CD4-positive, alpha-beta memory T cell (primary cell): ENCODE measurements at regions of chr1 and their contacts with region 1.

Region 1: DNA sequence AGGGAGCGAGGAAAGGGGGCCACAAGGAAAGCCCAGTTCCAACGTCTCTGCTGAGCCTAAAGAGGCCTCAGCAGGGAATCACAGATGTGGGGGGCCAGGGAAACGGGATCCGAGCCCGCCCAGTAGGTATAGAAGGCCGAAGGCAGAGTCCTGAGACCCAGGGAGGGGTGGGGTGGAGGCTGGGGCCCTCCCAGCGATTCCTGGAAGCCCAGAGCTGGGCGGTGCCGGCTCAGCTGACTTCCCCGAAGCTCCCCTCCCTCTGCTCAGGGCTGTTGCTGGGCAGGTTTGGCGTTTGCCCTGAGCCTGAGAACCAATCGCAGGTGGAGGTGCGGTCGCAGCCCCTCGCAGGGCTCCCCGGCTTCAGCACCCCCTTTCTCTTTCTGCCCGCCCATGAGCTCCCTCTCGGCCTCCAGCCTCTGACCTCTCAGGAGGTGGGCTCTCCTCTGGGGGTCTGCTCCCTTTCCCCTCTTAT is 12.8 kb downstream of the ADAMTSL4 start:
- DNase-seq: peak; percentile 75 to 88 (median 79)
- H3K4me3 ChIP-seq: peak overlapping the region; percentile 72 to 79
- H3K4me3 Mint-ChIP-seq: peak overlapping the region; percentile 90 to 99 (median 93)
- H3K27ac ChIP-seq: peak overlapping the region; percentile 93
- H3K27ac Mint-ChIP-seq: peak overlapping the region; percentile 95 to 100 (median 99)
- H3K4me1 ChIP-seq: peaks cover 66% of the 10 kb centered on the region
- H3K4me1 Mint-ChIP-seq: peaks cover 33 to 70% (median 47%) of the 10 kb centered on the region in 4 donors
- H3K27me3 ChIP-seq: no peaks in the 10 kb centered on the region
- H3K27me3 Mint-ChIP-seq: no peaks in the 10 kb centered on the region

Region 2: GRCh38 chr1:149886396-149887195 is 675.4 kb before region 1 on chr1:
- CTCF ChIA-PET with region 1: no interaction called
- POLR2A ChIA-PET with region 1: interaction called, 15 read pairs
- intact Hi-C with region 1: no loop called
- DNase-seq: peak; percentile 94 to 97 (median 96)
- H3K4me3 ChIP-seq: peak overlapping the region; percentile 75 to 82
- H3K4me3 Mint-ChIP-seq: no peak overlapping the region
- H3K27ac ChIP-seq: peak overlapping the region; percentile 88
- H3K27ac Mint-ChIP-seq: no peak overlapping the region
- H3K4me1 ChIP-seq: peaks cover 27% of the 10 kb centered on the region
- H3K4me1 Mint-ChIP-seq: peaks cover 8 to 19% (median 10%) of the 10 kb centered on the region in 4 donors
- H3K27me3 ChIP-seq: no peaks in the 10 kb centered on the region
- H3K27me3 Mint-ChIP-seq: no peaks in the 10 kb centered on the region

Region 3: GRCh38 chr1:150464422-150464826 is 97.6 kb before region 1 on chr1:
- CTCF ChIA-PET with region 1: interaction called, 10 read pairs
- POLR2A ChIA-PET with region 1: interaction called, 5 read pairs
- intact Hi-C with region 1: loop called (anchors 1 kb)
- DNase-seq: peak; percentile 66 to 77 (median 70)
- H3K4me3 ChIP-seq: no peak overlapping the region
- H3K4me3 Mint-ChIP-seq: no peak overlapping the region
- H3K27ac ChIP-seq: no peak overlapping the region
- H3K27ac Mint-ChIP-seq: peak overlapping the region in 3 of 7 donors; percentile 0 to 88 (median 38)
- H3K4me1 ChIP-seq: no peaks in the 10 kb centered on the region
- H3K4me1 Mint-ChIP-seq: peaks cover 0 to 6% (median 4%) of the 10 kb centered on the region in 4 donors
- H3K27me3 ChIP-seq: no peaks in the 10 kb centered on the region
- H3K27me3 Mint-ChIP-seq: no peaks in the 10 kb centered on the region

Region 4: GRCh38 chr1:150578965-150579798 is 17.2 kb after region 1 on chr1 and contains the start of gene MCL1:
- CTCF ChIA-PET with region 1: interaction called, 433 read pairs
- POLR2A ChIA-PET with region 1: interaction called, 1,751 read pairs
- intact Hi-C with region 1: loop called (anchors 1 kb)
- DNase-seq: peak; percentile 86 to 94 (median 89)
- H3K4me3 ChIP-seq: peak within 1 kb of the TSS; percentile 96 to 100
- H3K4me3 Mint-ChIP-seq: peak within 1 kb of the TSS; percentile 98 to 100 (median 99)
- H3K27ac ChIP-seq: peak within 1 kb of the TSS; percentile 97
- H3K27ac Mint-ChIP-seq: peak within 1 kb of the TSS; percentile 94 to 99 (median 99)
- H3K4me1 ChIP-seq: peaks cover 33% of the 10 kb centered on the region
- H3K4me1 Mint-ChIP-seq: peaks cover 18 to 58% (median 28%) of the 10 kb centered on the region in 4 donors
- H3K27me3 ChIP-seq: no peaks in the 10 kb centered on the region
- H3K27me3 Mint-ChIP-seq: no peaks in the 10 kb centered on the region
- total RNA-seq, gene MCL1: 314 to 331 TPM

Region 5: GRCh38 chr1:150621497-150622302 is 59.7 kb after region 1 on chr1:
- CTCF ChIA-PET with region 1: interaction called, 501 read pairs
- POLR2A ChIA-PET with region 1: interaction called, 439 read pairs
- intact Hi-C with region 1: loop called (anchors 1 kb)
- DNase-seq: peak; percentile 66 to 71 (median 69)
- H3K4me3 ChIP-seq: no peak overlapping the region
- H3K4me3 Mint-ChIP-seq: peak overlapping the region in 7 of 8 donors; percentile 8 to 61 (median 35)
- H3K27ac ChIP-seq: peak overlapping the region; percentile 53
- H3K27ac Mint-ChIP-seq: peak overlapping the region; percentile 82 to 95 (median 91)
- H3K4me1 ChIP-seq: peaks cover 38% of the 10 kb centered on the region
- H3K4me1 Mint-ChIP-seq: peaks cover 32 to 64% (median 51%) of the 10 kb centered on the region in 4 donors
- H3K27me3 ChIP-seq: no peaks in the 10 kb centered on the region
- H3K27me3 Mint-ChIP-seq: no peaks in the 10 kb centered on the region

Region 6: GRCh38 chr1:150696590-150697524 is 134.8 kb after region 1 on chr1 and contains the start of gene GOLPH3L:
- CTCF ChIA-PET with region 1: interaction called, 18 read pairs
- POLR2A ChIA-PET with region 1: interaction called, 9 read pairs
- intact Hi-C with region 1: loop called (anchors 1 kb)
- DNase-seq: peak; percentile 90 to 97 (median 93)
- H3K4me3 ChIP-seq: peak within 1 kb of the TSS; percentile 86 to 92
- H3K4me3 Mint-ChIP-seq: peak within 1 kb of the TSS; percentile 94 to 100 (median 98)
- H3K27ac ChIP-seq: peak within 1 kb of the TSS; percentile 70
- H3K27ac Mint-ChIP-seq: peak within 1 kb of the TSS; percentile 88 to 100 (median 96)
- H3K4me1 ChIP-seq: peaks cover 27% of the 10 kb centered on the region
- H3K4me1 Mint-ChIP-seq: peaks cover 17 to 40% (median 27%) of the 10 kb centered on the region in 4 donors
- H3K27me3 ChIP-seq: no peaks in the 10 kb centered on the region
- H3K27me3 Mint-ChIP-seq: peaks cover 1 to 3% of the 10 kb centered on the region in 2 donors
- total RNA-seq, gene GOLPH3L: 29.7 to 30.4 TPM

Region 7: DNA sequence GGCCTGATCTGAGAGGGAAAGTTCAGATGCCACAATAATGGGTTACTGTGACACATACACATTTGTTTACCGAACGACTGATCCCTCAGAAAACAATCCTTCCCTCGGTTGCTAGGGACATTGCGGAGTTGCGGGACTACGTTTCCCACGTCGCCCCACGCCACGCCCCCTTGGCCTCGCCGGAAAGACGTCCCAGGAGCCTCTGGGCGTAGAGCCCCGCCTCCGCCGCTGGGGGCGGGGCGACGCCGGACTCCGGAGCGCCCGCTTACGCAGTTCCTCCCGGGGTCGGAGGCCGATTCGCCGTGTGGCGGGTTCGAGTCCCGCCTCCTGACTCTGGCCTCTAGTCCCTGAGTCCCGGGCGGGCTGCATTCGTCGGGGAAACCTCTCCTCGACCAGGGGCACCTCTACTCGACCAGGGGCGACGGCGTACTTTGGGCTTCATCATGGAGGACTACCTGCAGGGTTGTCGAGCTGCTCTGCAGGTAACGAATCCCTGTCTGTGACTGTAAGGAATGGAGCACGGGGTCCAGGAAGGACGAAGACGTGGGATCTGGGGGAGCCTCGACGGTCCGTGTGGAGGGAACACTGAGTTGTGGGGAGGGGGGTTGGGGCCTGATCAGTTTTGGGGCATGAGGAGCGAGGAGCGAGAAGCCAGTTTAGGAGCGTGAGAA is 446.3 kb after region 1 on chr1 and contains the start of gene PRUNE1:
- CTCF ChIA-PET with region 1: no interaction called
- POLR2A ChIA-PET with region 1: interaction called, 3 read pairs
- intact Hi-C with region 1: loop called (anchors 5 kb)
- DNase-seq: peak; percentile 92 to 99 (median 96)
- H3K4me3 ChIP-seq: peak within 1 kb of the TSS; percentile 74 to 92
- H3K4me3 Mint-ChIP-seq: peak within 1 kb of the TSS; percentile 88 to 99 (median 95)
- H3K27ac ChIP-seq: peak within 1 kb of the TSS; percentile 88
- H3K27ac Mint-ChIP-seq: peak within 1 kb of the TSS; percentile 90 to 100 (median 99)
- H3K4me1 ChIP-seq: peaks cover 67% of the 10 kb centered on the region
- H3K4me1 Mint-ChIP-seq: peaks cover 47 to 93% (median 69%) of the 10 kb centered on the region in 4 donors
- H3K27me3 ChIP-seq: no peaks in the 10 kb centered on the region
- H3K27me3 Mint-ChIP-seq: no peaks in the 10 kb centered on the region
- total RNA-seq, gene PRUNE1: 35.0 to 38.9 TPM